Heart left ventricle (tissue), 16 donors: ENCODE measurements at regions of chr7 and their contacts with region 1.

Region 1: GRCh38 chr7:131040467-131040932 is 287.2 kb upstream of the MKLN1 start:
- DNase-seq: peak in 2 of 5 donors; percentile 53 to 56
- ATAC-seq: peak; percentile 16 to 78 (median 68)
- H3K4me3 ChIP-seq: peak overlapping the region in 1 of 12 donors; percentile 0
- H3K27ac ChIP-seq: peak overlapping the region in 9 of 12 donors; percentile 6 to 72 (median 42)
- H3K4me1 ChIP-seq: peaks cover 8 to 61% (median 37%) of the 10 kb centered on the region in 12 donors
- H3K27me3 ChIP-seq: no peaks in the 10 kb centered on the region
- CTCF ChIP-seq: peak; percentile 82 to 97 (median 90)
- POLR2A ChIP-seq: no peak

Region 2: DNA sequence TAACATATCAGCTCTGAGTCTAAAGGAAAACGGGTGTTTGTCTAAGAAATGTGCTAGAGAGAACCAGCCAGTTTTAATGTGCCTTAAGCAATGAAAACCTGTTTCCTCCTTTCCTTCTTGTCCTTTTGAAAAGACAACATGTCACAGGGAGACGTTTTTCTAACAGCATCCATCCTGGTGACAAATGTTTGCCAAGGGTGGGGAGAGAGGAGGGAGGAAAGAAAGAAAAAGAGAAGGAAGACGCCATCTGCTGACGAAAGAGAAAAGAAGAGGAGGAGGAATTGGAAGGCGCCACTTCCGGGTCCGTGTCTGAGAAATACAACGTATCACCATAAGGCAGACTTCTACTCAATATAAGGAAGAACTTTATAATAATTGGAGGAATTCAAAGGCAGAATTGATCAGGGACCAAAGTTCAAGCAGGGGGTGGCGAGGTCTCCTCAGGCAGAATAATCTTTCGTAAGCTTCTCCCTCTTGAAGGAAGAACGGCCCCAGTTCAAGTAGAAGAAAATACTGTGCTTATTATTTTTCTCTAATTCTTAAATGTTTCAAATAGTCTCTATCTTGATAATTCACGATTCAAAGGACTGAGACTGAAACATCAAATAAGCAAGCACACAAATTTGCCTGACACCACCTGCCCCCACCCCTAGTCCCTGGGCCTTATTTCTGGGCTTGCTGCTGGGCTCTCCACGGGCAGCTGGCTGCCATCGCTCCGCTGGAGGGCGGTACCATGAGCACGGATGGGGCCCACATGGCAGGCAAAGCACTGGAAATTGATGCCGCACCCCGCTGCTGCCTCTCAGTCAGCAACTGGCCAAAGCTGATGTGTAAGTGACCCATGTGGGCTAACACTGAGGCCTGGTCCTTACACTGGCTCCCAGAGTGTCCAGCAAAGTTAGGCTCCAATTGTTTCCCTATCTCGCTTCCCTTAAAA is 32.8 kb before region 1 on chr7:
- intact Hi-C with region 1: loop called in 1 of 10 experiments (anchors 5 kb)
- DNase-seq: peak in 4 of 5 donors; percentile 49 to 61 (median 58)
- ATAC-seq: peak; percentile 24 to 74 (median 74)
- H3K4me3 ChIP-seq: no peak overlapping the region
- H3K27ac ChIP-seq: peak overlapping the region in 10 of 12 donors; percentile 4 to 77 (median 42)
- H3K4me1 ChIP-seq: peaks cover 10 to 72% (median 49%) of the 10 kb centered on the region in 12 donors
- H3K27me3 ChIP-seq: no peaks in the 10 kb centered on the region
- CTCF ChIP-seq: peak; percentile 21 to 68 (median 54)
- POLR2A ChIP-seq: no peak

Region 3: DNA sequence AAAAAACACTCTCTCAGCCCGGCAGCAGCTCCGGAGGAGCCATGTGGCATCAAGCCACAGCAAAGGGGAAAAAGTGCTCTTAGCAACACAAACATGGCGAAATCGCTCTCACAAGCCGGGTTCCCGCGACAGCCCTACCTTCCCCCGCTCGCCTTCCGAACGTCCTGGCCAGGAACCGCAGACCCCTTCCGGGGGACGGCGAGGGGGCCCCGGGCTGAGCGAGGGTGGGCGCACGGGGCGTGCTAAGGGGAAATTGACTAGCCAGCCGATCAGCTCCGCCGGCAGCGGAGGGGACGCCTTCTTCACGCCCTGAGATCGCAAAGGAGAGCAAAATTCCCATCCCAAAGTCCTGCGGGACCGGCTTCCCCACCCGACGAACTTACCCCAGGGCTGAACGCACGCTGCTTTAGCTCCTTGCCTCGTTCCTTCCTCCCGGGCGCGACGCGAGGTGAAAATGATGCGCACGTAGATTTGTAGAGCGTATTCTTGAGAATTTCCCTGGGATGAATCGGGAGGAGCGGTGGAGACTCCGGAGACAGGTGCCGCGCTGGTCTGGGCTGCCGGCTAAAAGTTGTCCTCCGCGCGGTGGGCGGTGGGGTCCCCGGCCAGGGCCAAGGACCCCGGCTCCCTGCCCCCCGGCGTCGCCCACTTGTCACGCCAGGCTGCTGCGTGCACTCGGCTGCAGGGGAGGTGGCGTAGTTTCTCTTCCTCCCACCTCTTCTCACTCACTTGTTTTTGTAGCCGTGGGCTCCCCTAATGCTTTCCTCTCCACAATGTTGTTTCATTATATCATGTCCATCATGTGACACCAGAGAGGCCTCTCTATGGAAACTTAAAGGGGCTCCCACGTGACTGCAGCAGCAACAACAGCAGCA is 67.1 kb after region 1 on chr7:
- intact Hi-C with region 1: no loop called
- DNase-seq: peak; percentile 76 to 85 (median 80)
- ATAC-seq: peak; percentile 36 to 56 (median 48)
- H3K4me3 ChIP-seq: peak overlapping the region; percentile 62 to 98 (median 86)
- H3K27ac ChIP-seq: peak overlapping the region; percentile 94 to 100 (median 99)
- H3K4me1 ChIP-seq: peaks cover 5 to 67% (median 50%) of the 10 kb centered on the region in 12 donors
- H3K27me3 ChIP-seq: no peaks in the 10 kb centered on the region
- CTCF ChIP-seq: peak in 2 of 12 donors; percentile 14 to 26
- POLR2A ChIP-seq: peak in 1 of 2 donors; percentile 87